ENCODE measurements at regions of chr19 and their contacts with region 1.

Region 1: DNA sequence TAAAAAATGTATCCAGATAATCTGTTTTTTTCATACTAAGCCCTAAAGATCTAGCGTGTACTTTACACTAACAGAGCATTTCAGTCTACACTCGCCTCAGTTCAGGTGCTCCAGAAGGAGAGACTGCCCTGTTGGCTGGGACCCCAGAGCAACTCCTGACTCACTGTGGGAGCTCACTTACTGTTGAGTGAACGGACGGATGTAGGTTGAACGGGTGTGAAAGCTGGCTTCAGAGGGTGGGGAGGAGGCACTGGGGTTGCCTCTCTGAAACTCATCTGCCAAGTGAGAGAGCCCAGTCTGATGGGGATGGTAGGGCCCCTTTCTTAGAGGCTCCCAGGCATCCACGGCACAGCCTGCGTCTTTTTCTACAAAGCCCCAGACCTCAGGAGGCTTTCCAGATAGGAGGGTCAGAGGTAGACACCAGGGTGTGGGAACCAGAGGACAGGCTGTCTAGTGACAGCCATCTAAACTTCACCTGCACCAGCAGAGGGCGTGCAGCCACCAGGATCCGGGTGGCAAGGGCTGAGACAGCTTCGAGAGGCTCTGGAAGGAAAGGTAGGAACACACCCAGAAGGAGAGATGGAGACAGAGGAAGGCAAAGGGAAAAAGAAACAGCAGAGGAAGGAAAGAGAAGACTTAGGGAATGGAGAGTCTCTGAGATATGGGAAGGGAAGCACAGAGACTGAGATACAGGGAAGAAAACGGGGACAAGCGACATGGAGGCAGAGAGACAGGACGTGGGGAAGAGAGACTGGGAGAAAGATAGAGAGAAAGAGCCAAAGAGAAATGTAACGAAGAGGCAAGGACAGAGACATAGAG is 3.7 kb downstream of the KASH5 start:
- DNase-seq: peak; percentile 86
- ATAC-seq: peak; percentile 59
- H3K4me3 ChIP-seq: no peak overlapping the region
- H3K4me3 Mint-ChIP-seq: peak overlapping the region; percentile 44
- H3K27ac ChIP-seq: peak overlapping the region; percentile 61 to 65
- H3K27ac Mint-ChIP-seq: peak overlapping the region; percentile 79
- H3K4me1 ChIP-seq: peaks cover 21 to 46% of the 10 kb centered on the region in 2 donors
- H3K4me1 Mint-ChIP-seq: peaks cover 41% of the 10 kb centered on the region
- H3K27me3 ChIP-seq: no peaks in the 10 kb centered on the region
- H3K27me3 Mint-ChIP-seq: no peaks in the 10 kb centered on the region
- CTCF ChIP-seq: peak; percentile 87

Region 2: DNA sequence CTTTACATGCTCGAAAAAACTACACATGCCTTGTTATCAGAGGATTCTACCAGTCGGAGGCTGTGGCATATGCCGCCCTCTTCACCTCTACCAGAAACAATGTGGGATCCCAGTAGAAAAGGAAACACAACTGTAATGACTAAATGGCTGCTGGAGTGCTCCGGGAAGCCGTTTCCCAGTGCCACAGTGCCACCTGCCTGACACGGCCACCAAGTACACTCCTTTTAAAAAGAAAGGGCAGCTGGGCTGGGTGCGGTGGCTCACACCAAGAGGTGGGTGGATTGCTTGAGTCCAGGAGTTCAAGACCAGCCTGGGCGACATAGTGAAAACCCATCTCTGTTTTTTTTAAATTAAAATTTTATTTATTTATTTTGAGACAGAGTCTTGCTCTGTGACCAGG is 166.9 kb before region 1 on chr19:
- CTCF ChIA-PET with region 1: interaction called, 10 read pairs
- POLR2A ChIA-PET with region 1: no interaction called
- intact Hi-C with region 1: loop called (anchors 5 kb)
- DNase-seq: peak; percentile 44
- ATAC-seq: no peak
- H3K4me3 ChIP-seq: no peak overlapping the region
- H3K4me3 Mint-ChIP-seq: no peak overlapping the region
- H3K27ac ChIP-seq: no peak overlapping the region
- H3K27ac Mint-ChIP-seq: no peak overlapping the region
- H3K4me1 ChIP-seq: peaks cover 0 to 8% of the 10 kb centered on the region in 2 donors
- H3K4me1 Mint-ChIP-seq: peaks cover 8% of the 10 kb centered on the region
- H3K27me3 ChIP-seq: no peaks in the 10 kb centered on the region
- H3K27me3 Mint-ChIP-seq: peaks cover 7% of the 10 kb centered on the region
- CTCF ChIP-seq: peak; percentile 23

Region 3: GRCh38 chr19:49309087-49309486 is 82.7 kb before region 1 on chr19:
- CTCF ChIA-PET with region 1: interaction called, 21 read pairs
- POLR2A ChIA-PET with region 1: no interaction called
- intact Hi-C with region 1: loop called (anchors 2 kb)
- DNase-seq: no peak
- ATAC-seq: no peak
- H3K4me3 ChIP-seq: no peak overlapping the region
- H3K4me3 Mint-ChIP-seq: peak overlapping the region; percentile 35
- H3K27ac ChIP-seq: peak overlapping the region in 1 of 2 donors; percentile 10
- H3K27ac Mint-ChIP-seq: peak overlapping the region; percentile 78
- H3K4me1 ChIP-seq: peaks cover 16 to 38% of the 10 kb centered on the region in 2 donors
- H3K4me1 Mint-ChIP-seq: peaks cover 46% of the 10 kb centered on the region
- H3K27me3 ChIP-seq: no peaks in the 10 kb centered on the region
- H3K27me3 Mint-ChIP-seq: no peaks in the 10 kb centered on the region
- CTCF ChIP-seq: no peak

Region 4: GRCh38 chr19:49340069-49340864 is 51.5 kb before region 1 on chr19:
- CTCF ChIA-PET with region 1: interaction called, 23 read pairs
- POLR2A ChIA-PET with region 1: interaction called, 18 read pairs
- intact Hi-C with region 1: loop called (anchors 1 kb)
- DNase-seq: peak; percentile 98
- ATAC-seq: peak; percentile 71
- H3K4me3 ChIP-seq: peak overlapping the region in 4 of 5 experiments; percentile 94 to 98 (median 98)
- H3K4me3 Mint-ChIP-seq: peak overlapping the region; percentile 80
- H3K27ac ChIP-seq: peak overlapping the region; percentile 89 to 93
- H3K27ac Mint-ChIP-seq: peak overlapping the region; percentile 95
- H3K4me1 ChIP-seq: peaks cover 52 to 77% of the 10 kb centered on the region in 2 donors
- H3K4me1 Mint-ChIP-seq: peaks cover 75% of the 10 kb centered on the region
- H3K27me3 ChIP-seq: no peaks in the 10 kb centered on the region
- H3K27me3 Mint-ChIP-seq: no peaks in the 10 kb centered on the region
- CTCF ChIP-seq: no peak

Region 5: GRCh38 chr19:49415102-49415809 is 23.5 kb after region 1 on chr19:
- CTCF ChIA-PET with region 1: interaction called, 25 read pairs
- POLR2A ChIA-PET with region 1: no interaction called
- intact Hi-C with region 1: no loop called
- DNase-seq: peak; percentile 59
- ATAC-seq: peak; percentile 83
- H3K4me3 ChIP-seq: no peak overlapping the region
- H3K4me3 Mint-ChIP-seq: peak overlapping the region; percentile 16
- H3K27ac ChIP-seq: no peak overlapping the region
- H3K27ac Mint-ChIP-seq: peak overlapping the region; percentile 15
- H3K4me1 ChIP-seq: peaks cover 17 to 41% of the 10 kb centered on the region in 2 donors
- H3K4me1 Mint-ChIP-seq: peaks cover 34% of the 10 kb centered on the region
- H3K27me3 ChIP-seq: peaks cover 0 to 40% (median 18%) of the 10 kb centered on the region in 4 experiments
- H3K27me3 Mint-ChIP-seq: peaks cover 26% of the 10 kb centered on the region
- CTCF ChIP-seq: no peak

Region 6: DNA sequence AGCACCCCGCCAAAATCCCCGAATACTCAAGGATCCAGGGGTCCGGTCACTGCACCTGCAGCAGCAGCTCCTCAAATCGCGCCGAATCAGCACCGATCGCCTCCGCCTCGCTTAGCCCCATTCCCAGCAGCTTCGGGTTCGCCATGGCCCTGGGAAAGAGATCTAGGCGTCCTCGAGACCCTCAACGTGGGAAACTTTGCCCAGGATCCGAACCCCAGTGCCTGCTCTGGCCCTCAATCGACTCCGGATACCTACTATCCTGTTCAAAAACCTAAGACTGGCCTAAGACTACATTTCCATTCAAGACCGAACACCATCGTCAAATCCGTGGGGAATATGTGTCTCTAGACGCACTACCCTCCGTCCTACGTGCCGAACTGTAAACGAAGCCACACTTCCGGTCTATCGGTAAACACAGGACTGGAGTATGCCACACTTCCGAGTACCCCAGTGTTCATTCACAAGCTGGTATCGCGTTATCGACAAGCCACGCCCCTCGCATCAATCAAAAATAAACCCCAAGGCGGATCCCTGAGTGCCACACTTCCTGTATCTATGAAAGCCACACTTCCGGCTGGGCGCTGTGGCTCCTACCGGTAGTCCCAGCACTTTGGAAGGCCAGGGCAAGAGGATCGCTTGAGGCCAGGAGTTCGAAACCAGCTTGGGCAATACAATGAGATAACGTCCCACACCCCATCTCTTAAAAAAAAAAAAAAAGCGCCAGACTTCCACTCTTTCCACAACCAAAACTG is 59.8 kb after region 1 on chr19 and contains the start of gene PIH1D1:
- CTCF ChIA-PET with region 1: interaction called, 27 read pairs
- POLR2A ChIA-PET with region 1: interaction called, 3 read pairs
- intact Hi-C with region 1: no loop called
- DNase-seq: peak; percentile 98
- ATAC-seq: peak; percentile 57
- H3K4me3 ChIP-seq: peak within 1 kb of the TSS; percentile 87 to 100 (median 99)
- H3K4me3 Mint-ChIP-seq: peak within 1 kb of the TSS; percentile 99
- H3K27ac ChIP-seq: peak within 1 kb of the TSS; percentile 99
- H3K27ac Mint-ChIP-seq: peak within 1 kb of the TSS; percentile 100
- H3K4me1 ChIP-seq: peaks cover 23 to 36% of the 10 kb centered on the region in 2 donors
- H3K4me1 Mint-ChIP-seq: peaks cover 46% of the 10 kb centered on the region
- H3K27me3 ChIP-seq: no peaks in the 10 kb centered on the region
- H3K27me3 Mint-ChIP-seq: no peaks in the 10 kb centered on the region
- CTCF ChIP-seq: no peak
- total RNA-seq, gene PIH1D1: 168 and 184 TPM in 2 replicates

Measured in B cell (primary cell).